Aorta (tissue), 5 donors: ENCODE measurements at regions of chr10 and their contacts with region 1.

Region 1: DNA sequence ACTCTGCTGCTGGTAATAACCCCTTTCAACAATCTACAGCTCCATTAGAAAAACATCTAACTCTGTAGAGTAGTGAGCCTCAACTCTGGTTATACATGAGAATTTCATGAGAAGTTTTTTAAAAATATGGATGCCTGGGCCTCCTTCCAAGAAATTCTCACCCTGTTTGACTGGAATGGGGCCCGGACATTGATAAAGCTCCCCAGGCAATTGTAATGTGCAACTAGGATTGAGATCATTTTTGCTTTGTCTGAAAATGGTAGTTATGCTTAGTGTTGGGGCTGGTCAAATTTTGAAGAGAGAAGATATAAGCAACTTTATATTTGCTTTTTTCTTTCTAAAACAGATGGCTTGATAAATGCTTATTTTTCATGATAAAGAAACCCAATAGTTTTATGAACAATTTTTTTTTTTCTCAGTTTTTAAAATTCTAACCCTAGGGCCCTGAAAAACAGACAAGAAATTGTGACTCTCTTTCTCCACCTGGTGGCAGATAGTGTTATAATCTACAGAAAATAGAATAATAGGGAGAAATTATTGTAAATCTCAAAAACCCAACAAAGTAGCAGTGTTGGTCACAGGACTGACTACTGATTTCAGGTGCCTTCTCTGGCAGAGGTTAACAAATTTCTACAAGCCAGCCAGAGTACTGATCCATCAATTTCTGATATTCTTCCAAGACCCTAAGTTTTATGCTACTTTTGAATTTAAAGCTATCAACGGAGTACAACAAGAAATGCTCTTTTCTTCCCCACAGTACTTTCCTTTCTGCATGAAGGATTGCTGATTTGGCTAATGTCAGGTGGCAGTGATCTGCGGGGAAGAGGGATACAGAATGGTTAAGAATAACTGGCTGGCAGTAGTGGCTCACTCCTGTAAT is 174.8 kb downstream of the DKK1 start:
- DNase-seq: no peak
- ATAC-seq: no peak
- H3K4me3 ChIP-seq: no peak overlapping the region
- H3K27ac ChIP-seq: no peak overlapping the region
- H3K4me1 ChIP-seq: no peaks in the 10 kb centered on the region
- H3K27me3 ChIP-seq: no peaks in the 10 kb centered on the region

Region 2: GRCh38 chr10:50988792-50989191 is 1500.1 kb before region 1 on chr10:
- intact Hi-C with region 1: loop called in 1 of 2 experiments (anchors 5 kb)
- DNase-seq: no peak
- ATAC-seq: no peak
- H3K4me3 ChIP-seq: peak overlapping the region; percentile 37 to 92
- H3K27ac ChIP-seq: no peak overlapping the region
- H3K4me1 ChIP-seq: no peaks in the 10 kb centered on the region
- H3K27me3 ChIP-seq: no peaks in the 10 kb centered on the region

Region 3: DNA sequence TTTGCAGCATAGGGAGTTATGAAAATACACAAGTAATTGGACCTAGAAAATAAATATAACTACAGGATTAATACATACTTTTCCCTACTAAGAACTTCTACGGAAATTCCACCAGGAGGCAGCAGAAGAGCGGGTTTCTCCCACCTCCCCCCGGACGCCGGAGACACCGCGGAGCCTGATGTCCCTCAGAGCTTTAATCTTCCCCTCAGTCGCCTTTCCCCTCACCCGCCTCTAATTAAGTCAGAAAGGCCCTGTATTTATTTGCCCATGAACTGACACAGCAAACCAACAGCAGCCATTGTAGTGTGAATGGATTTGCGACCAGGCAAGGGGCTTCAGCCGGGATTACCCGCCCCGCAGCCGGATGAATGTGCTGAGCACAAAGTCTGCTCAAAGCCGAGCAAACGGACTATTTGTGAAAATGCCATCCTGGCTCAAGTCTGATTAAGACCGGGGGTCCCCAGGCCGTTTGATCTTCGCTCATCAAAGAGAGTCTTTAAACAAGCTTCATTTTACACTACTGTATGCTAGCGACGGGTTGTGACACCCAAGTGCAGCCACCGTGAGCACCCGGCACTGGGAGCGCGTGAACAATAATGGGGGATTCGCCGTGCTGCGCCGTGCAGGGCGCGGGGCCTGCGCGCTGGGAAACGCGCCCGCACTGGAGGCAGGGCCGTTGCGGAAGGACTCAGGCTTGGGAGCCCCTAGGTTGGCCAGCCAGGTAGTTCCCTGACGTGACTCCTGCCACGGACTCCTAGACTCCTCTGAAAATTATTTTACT is 180.4 kb before region 1 on chr10:
- intact Hi-C with region 1: loop called (anchors 1 to 2 kb)
- DNase-seq: peak; percentile 66 to 76
- ATAC-seq: peak; percentile 87
- H3K4me3 ChIP-seq: peak overlapping the region; percentile 40 to 60
- H3K27ac ChIP-seq: no peak overlapping the region
- H3K4me1 ChIP-seq: no peaks in the 10 kb centered on the region
- H3K27me3 ChIP-seq: no peaks in the 10 kb centered on the region

Region 4: DNA sequence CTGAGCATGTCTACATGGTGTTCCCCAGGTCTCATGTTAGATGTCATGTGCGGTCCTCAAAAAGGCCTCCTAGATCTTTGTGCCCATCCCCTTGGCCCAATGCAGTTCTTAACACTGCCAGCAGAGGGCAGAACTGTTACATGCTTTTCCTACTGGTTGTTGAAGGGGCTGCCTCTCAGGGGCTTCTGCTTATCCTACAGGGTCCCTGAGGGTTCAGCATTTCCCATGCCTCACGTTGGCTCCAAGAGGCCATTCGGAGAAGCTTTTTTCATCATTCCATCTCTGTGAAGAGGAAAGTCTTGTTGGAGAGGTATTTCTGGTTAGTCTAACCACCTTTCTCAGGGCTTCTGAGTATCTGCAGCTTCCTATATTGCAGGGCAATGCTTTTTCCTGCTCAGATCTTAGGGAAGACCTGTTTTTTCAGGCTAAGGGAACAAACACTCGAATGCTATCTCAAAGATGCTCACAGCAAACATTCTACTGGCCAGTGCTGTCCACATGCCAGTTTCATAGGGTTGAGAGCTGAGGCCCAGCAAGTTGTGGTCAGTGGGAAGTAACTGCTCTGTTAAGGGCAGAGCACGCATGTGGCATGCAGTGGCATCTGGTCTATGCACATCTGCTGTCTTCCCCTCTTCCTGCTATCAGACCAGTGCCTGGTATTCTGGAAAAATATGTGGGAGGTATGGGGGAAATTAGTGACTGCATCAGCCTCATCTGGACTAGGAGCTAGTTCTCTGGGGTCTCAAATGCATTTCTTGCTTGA is 252.2 kb after region 1 on chr10:
- intact Hi-C with region 1: no loop called
- DNase-seq: no peak
- ATAC-seq: no peak
- H3K4me3 ChIP-seq: no peak overlapping the region
- H3K27ac ChIP-seq: no peak overlapping the region
- H3K4me1 ChIP-seq: no peaks in the 10 kb centered on the region
- H3K27me3 ChIP-seq: no peaks in the 10 kb centered on the region